ENCODE measurements at regions of chr1 and their contacts with region 1.

Region 1: DNA sequence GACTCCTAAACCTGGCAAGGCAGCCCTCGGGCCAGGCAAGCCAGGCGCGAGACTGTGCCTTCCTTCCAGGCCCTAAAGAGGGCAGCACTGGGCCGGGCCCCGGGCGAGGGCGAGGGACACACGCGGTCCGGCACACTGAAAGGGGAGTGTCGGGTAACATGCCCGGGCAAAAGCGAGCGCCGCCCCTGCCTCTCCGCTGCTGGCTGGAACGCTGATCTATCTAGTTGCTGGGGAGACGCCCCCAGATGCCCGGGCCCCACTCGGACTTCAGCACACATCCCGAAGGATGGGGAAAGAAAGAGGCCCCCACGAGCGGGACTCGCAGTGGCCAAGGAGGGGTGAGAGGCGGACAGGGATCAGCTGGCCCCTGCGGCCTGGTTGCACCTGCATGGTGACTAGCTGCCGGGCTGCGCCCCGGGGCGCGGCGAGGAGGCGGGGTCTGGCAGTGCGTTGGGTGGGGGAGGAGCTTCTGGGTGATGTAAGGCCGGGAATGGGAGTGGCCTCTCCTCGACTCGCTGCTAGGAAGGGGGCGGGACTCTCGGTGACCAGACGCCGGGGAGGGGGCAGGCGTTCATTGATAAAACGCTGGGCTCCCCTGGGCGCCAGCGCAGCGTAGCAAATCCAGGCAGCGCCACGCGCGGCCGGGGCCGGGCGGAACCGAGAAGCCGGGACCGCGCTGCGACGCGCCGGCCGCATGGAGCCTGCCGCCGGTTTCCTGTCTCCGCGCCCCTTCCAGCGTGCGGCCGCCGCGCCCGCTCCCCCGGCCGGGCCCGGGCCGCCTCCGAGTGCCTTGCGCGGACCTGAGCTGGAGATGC is at the start of gene PLK3:
- DNase-seq: peak; percentile 99
- ATAC-seq: peak; percentile 89
- H3K4me3 ChIP-seq: peak within 1 kb of the TSS; percentile 61 to 88 (median 85)
- H3K4me3 Mint-ChIP-seq: peak within 1 kb of the TSS; percentile 99
- H3K27ac ChIP-seq: peak within 1 kb of the TSS; percentile 84 to 93
- H3K27ac Mint-ChIP-seq: peak within 1 kb of the TSS; percentile 100
- H3K4me1 ChIP-seq: peaks cover 16 to 38% of the 10 kb centered on the region in 2 donors
- H3K4me1 Mint-ChIP-seq: peaks cover 33% of the 10 kb centered on the region
- H3K27me3 ChIP-seq: no peaks in the 10 kb centered on the region
- H3K27me3 Mint-ChIP-seq: no peaks in the 10 kb centered on the region
- CTCF ChIP-seq: peak; percentile 85
- total RNA-seq, gene PLK3: 30.1 and 35.9 TPM in 2 replicates

Region 2: GRCh38 chr1:44721485-44722361 is 78.3 kb before region 1 on chr1:
- CTCF ChIA-PET with region 1: no interaction called
- POLR2A ChIA-PET with region 1: interaction called, 14 read pairs
- intact Hi-C with region 1: no loop called
- DNase-seq: peak; percentile 91
- ATAC-seq: peak; percentile 80
- H3K4me3 ChIP-seq: peak overlapping the region in 3 of 5 experiments; percentile 8 to 21 (median 15)
- H3K4me3 Mint-ChIP-seq: peak overlapping the region; percentile 78
- H3K27ac ChIP-seq: peak overlapping the region; percentile 88 to 93
- H3K27ac Mint-ChIP-seq: peak overlapping the region; percentile 99
- H3K4me1 ChIP-seq: peaks cover 43 to 48% of the 10 kb centered on the region in 2 donors
- H3K4me1 Mint-ChIP-seq: peaks cover 62% of the 10 kb centered on the region
- H3K27me3 ChIP-seq: no peaks in the 10 kb centered on the region
- H3K27me3 Mint-ChIP-seq: no peaks in the 10 kb centered on the region
- CTCF ChIP-seq: no peak

Region 3: DNA sequence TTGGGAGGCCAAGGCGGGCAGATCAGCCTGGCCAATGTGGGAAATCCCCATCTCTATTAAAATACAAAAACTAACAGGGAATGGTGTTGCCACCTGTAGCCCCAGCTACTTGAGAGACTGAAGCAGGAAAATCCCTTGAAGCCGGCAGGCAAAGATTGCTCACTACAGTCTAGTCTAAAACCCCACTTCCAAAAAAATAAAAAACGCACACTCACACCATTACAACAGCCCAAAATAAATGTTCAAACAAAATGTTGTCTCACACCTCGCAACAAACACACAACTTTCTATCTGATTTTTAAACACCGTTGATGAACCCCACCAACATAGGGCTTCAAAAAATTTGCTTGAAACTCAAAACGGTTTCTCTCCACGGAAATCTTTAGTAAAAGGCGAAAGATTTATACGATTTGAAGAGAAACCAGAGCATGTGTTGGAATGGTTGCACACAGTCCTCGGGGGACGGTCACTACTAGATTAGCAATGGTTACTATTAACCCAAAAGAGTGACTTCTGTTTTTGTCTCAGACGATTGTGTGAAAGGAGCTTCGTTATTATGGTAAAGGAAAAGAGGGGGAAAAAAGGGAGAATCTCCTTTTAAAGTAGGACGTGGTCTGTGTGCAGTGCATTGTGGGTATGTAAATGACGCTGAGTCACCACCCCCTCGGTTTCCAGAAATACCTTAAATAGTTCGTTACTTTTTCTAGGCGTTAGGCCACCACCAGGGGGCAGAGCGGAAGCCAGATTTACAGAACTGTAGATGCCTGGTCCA is 69.0 kb before region 1 on chr1 and contains the start of gene RNU5D-1:
- CTCF ChIA-PET with region 1: interaction called, 11 read pairs
- POLR2A ChIA-PET with region 1: interaction called, 4 read pairs
- intact Hi-C with region 1: loop called (anchors 2 kb)
- DNase-seq: peak; percentile 97
- ATAC-seq: peak; percentile 74
- H3K4me3 ChIP-seq: peak within 1 kb of the TSS; percentile 17 to 68 (median 50)
- H3K4me3 Mint-ChIP-seq: peak within 1 kb of the TSS; percentile 92
- H3K27ac ChIP-seq: peak within 1 kb of the TSS; percentile 93 to 96
- H3K27ac Mint-ChIP-seq: peak within 1 kb of the TSS; percentile 100
- H3K4me1 ChIP-seq: peaks cover 12 to 24% of the 10 kb centered on the region in 2 donors
- H3K4me1 Mint-ChIP-seq: peaks cover 24% of the 10 kb centered on the region
- H3K27me3 ChIP-seq: no peaks in the 10 kb centered on the region
- H3K27me3 Mint-ChIP-seq: no peaks in the 10 kb centered on the region
- CTCF ChIP-seq: peak; percentile 87
- total RNA-seq, gene RNU5D-1: not detected in 2 replicates

Region 4: GRCh38 chr1:44739361-44740178 is 60.4 kb before region 1 on chr1 and contains the start of gene KIF2C:
- CTCF ChIA-PET with region 1: interaction called, 3 read pairs
- POLR2A ChIA-PET with region 1: interaction called, 3 read pairs
- intact Hi-C with region 1: loop called (anchors 2 kb)
- DNase-seq: peak; percentile 97
- ATAC-seq: peak; percentile 100
- H3K4me3 ChIP-seq: peak within 1 kb of the TSS; percentile 54 to 90 (median 87)
- H3K4me3 Mint-ChIP-seq: peak within 1 kb of the TSS; percentile 95
- H3K27ac ChIP-seq: peak within 1 kb of the TSS; percentile 60 to 85
- H3K27ac Mint-ChIP-seq: peak within 1 kb of the TSS; percentile 93
- H3K4me1 ChIP-seq: peaks cover 7 to 12% of the 10 kb centered on the region in 2 donors
- H3K4me1 Mint-ChIP-seq: peaks cover 17% of the 10 kb centered on the region
- H3K27me3 ChIP-seq: no peaks in the 10 kb centered on the region
- H3K27me3 Mint-ChIP-seq: no peaks in the 10 kb centered on the region
- CTCF ChIP-seq: no peak
- total RNA-seq, gene KIF2C: 0.25 and 0.51 TPM in 2 replicates

Region 5: GRCh38 chr1:44812822-44813543 is 13.0 kb after region 1 on chr1:
- CTCF ChIA-PET with region 1: interaction called, 70 read pairs
- POLR2A ChIA-PET with region 1: interaction called, 61 read pairs
- intact Hi-C with region 1: loop called (anchors 2 kb)
- DNase-seq: no peak
- ATAC-seq: no peak
- H3K4me3 ChIP-seq: peak overlapping the region in 4 of 5 experiments; percentile 51 to 76 (median 68)
- H3K4me3 Mint-ChIP-seq: peak overlapping the region; percentile 92
- H3K27ac ChIP-seq: peak overlapping the region; percentile 70 to 86
- H3K27ac Mint-ChIP-seq: peak overlapping the region; percentile 37
- H3K4me1 ChIP-seq: peaks cover 38 to 53% of the 10 kb centered on the region in 2 donors
- H3K4me1 Mint-ChIP-seq: peaks cover 58% of the 10 kb centered on the region
- H3K27me3 ChIP-seq: no peaks in the 10 kb centered on the region
- H3K27me3 Mint-ChIP-seq: no peaks in the 10 kb centered on the region
- CTCF ChIP-seq: no peak

Region 6: GRCh38 chr1:44819608-44820327 is 19.8 kb after region 1 on chr1:
- CTCF ChIA-PET with region 1: interaction called, 70 read pairs
- POLR2A ChIA-PET with region 1: interaction called, 61 read pairs
- intact Hi-C with region 1: loop called (anchors 2 kb)
- DNase-seq: peak; percentile 95
- ATAC-seq: peak; percentile 82
- H3K4me3 ChIP-seq: peak overlapping the region; percentile 56 to 80 (median 66)
- H3K4me3 Mint-ChIP-seq: peak overlapping the region; percentile 93
- H3K27ac ChIP-seq: peak overlapping the region; percentile 99 to 100
- H3K27ac Mint-ChIP-seq: peak overlapping the region; percentile 100
- H3K4me1 ChIP-seq: peaks cover 16 to 24% of the 10 kb centered on the region in 2 donors
- H3K4me1 Mint-ChIP-seq: peaks cover 35% of the 10 kb centered on the region
- H3K27me3 ChIP-seq: no peaks in the 10 kb centered on the region
- H3K27me3 Mint-ChIP-seq: no peaks in the 10 kb centered on the region
- CTCF ChIP-seq: no peak

Region 7: DNA sequence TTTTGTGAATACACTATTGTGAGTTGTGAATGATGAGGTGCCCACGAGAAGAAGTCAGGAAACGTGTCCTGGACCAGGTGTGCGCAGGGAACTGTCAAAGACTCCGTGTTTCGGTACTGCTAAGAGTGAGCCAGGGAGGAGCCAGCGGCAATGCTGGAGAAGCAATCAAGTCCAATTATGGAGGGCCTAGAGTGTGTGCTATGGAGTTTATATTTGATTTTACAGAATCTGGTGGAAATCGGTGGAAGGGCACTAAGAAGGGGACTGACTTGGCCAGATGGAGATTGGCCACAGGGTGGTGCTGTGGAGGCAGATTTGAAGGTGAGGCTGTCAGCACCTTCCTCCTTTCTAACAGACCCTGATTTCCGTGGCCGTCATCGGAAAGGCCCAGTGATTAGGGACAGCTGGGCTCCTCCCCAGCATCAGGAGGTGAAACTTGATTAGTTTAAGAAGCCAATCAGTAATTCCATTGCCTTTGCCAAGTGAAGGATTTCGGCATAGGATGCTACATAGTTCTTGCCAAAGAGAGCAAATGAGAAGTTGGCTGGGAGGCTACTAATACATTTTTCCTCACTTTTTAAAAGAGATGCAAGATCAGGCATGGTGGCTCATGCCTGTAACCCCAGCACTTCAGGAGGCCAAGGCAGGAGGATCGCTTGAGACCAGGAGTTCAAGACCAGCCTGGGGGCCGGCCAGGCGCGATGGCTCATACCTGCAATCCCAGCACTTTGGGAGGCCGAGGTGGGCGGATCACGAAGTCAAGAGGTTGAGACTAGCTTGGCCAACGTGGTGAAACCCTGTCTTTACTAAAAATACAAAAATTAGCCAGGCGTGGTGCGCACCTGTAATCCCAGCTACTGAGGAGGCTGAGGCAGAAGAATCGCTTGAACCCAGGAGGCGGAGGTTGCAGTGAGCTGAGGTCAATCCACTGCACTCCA is 36.0 kb after region 1 on chr1:
- CTCF ChIA-PET with region 1: interaction called, 11 read pairs
- POLR2A ChIA-PET with region 1: interaction called, 7 read pairs
- intact Hi-C with region 1: loop called (anchors 2 kb)
- DNase-seq: peak; percentile 89
- ATAC-seq: peak; percentile 98
- H3K4me3 ChIP-seq: no peak overlapping the region
- H3K4me3 Mint-ChIP-seq: peak overlapping the region; percentile 62
- H3K27ac ChIP-seq: no peak overlapping the region
- H3K27ac Mint-ChIP-seq: peak overlapping the region; percentile 55
- H3K4me1 ChIP-seq: peaks cover 0 to 7% of the 10 kb centered on the region in 2 donors
- H3K4me1 Mint-ChIP-seq: peaks cover 11% of the 10 kb centered on the region
- H3K27me3 ChIP-seq: no peaks in the 10 kb centered on the region
- H3K27me3 Mint-ChIP-seq: peaks cover 6% of the 10 kb centered on the region
- CTCF ChIP-seq: peak; percentile 85